Vagina (tissue), 2 donors: ENCODE measurements at regions of chr3 and their contacts with region 1.

Region 1: GRCh38 chr3:137582484-137582883 is 181.6 kb upstream of the SOX14 start:
- DNase-seq: no peak
- H3K4me3 ChIP-seq: no peak overlapping the region
- H3K27ac ChIP-seq: no peak overlapping the region
- H3K4me1 ChIP-seq: no peaks in the 10 kb centered on the region
- H3K27me3 ChIP-seq: no peaks in the 10 kb centered on the region
- CTCF ChIP-seq: no peak
- POLR2A ChIP-seq: no peak

Region 2: DNA sequence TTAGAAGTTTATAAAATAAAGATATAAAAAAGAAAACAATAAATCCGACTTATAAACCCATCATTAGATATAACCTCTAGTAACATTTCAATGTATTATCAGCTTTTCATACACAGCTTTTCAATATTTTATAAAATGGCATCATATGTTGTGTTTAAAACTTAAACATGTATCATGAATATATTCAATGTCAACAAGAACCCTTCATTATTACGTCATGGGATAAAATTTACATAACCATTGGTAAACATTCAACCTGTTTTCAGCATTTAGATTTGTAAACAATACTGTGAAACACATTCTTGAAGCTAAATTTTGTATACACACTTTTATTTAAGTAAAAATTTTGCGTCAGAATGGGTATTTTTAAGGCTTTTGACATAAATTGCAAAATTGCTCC is 28.2 kb after region 1 on chr3:
- intact Hi-C with region 1: loop called (anchors 2 kb)
- DNase-seq: no peak
- H3K4me3 ChIP-seq: no peak overlapping the region
- H3K27ac ChIP-seq: no peak overlapping the region
- H3K4me1 ChIP-seq: no peaks in the 10 kb centered on the region
- H3K27me3 ChIP-seq: no peaks in the 10 kb centered on the region
- CTCF ChIP-seq: no peak
- POLR2A ChIP-seq: no peak

Region 3: GRCh38 chr3:137642831-137643230 is 60.3 kb after region 1 on chr3:
- intact Hi-C with region 1: no loop called
- DNase-seq: no peak
- H3K4me3 ChIP-seq: no peak overlapping the region
- H3K27ac ChIP-seq: no peak overlapping the region
- H3K4me1 ChIP-seq: no peaks in the 10 kb centered on the region
- H3K27me3 ChIP-seq: no peaks in the 10 kb centered on the region
- CTCF ChIP-seq: no peak
- POLR2A ChIP-seq: no peak